Esophagus muscularis mucosa (tissue), 4 donors: ENCODE measurements at regions of chr11 and their contacts with region 1.

Region 1: DNA sequence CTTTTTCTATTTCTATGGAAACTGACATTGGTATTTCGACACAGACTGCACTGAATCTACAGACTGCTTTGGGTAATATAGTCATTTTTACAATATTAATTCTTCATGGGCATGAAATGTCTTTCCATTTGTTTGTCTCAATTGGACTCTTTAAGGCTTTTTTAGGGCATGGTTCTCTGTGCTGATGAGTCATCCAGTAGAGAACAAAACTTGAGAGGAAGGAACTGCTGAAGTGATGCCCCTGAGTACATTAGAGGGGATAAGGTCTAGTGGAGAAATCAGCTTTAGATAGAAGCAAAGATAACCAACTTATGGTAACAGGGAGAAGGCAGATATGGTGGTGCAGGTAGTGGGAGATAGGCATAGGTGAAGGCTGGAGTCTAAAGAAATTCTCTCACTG is 25.1 kb downstream of the TSG101 start:
- DNase-seq: no peak
- H3K4me3 ChIP-seq: no peak overlapping the region
- H3K27ac ChIP-seq: no peak overlapping the region
- H3K4me1 ChIP-seq: no peaks in the 10 kb centered on the region
- H3K27me3 ChIP-seq: no peaks in the 10 kb centered on the region
- CTCF ChIP-seq: no peak
- EP300 ChIP-seq: no peak
- POLR2A ChIP-seq: no peak

Region 2: DNA sequence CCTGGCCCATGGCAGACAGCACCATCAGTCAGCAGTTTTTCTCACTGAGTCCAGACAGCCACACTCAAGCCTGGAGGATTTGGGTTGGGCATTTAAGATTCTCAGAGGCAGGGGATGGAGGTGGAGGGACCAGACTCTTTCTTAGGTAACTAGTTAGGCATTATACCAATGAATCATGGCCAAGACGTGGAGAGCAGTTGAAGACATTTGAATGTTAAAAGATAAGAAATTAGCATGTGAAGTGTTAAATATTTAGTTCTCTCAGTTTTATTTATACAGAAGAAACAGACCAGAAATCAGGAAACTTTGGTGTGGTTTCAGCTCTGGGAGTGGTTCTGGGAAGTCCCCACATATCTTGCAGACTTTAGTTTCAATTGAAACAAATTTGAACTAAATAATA is 169.3 kb before region 1 on chr11:
- intact Hi-C with region 1: loop called (anchors 10 kb)
- DNase-seq: no peak
- H3K4me3 ChIP-seq: no peak overlapping the region
- H3K27ac ChIP-seq: no peak overlapping the region
- H3K4me1 ChIP-seq: peaks cover 0 to 3% (median 0%) of the 10 kb centered on the region in 4 donors
- H3K27me3 ChIP-seq: no peaks in the 10 kb centered on the region
- CTCF ChIP-seq: no peak
- EP300 ChIP-seq: no peak
- POLR2A ChIP-seq: no peak

Region 3: DNA sequence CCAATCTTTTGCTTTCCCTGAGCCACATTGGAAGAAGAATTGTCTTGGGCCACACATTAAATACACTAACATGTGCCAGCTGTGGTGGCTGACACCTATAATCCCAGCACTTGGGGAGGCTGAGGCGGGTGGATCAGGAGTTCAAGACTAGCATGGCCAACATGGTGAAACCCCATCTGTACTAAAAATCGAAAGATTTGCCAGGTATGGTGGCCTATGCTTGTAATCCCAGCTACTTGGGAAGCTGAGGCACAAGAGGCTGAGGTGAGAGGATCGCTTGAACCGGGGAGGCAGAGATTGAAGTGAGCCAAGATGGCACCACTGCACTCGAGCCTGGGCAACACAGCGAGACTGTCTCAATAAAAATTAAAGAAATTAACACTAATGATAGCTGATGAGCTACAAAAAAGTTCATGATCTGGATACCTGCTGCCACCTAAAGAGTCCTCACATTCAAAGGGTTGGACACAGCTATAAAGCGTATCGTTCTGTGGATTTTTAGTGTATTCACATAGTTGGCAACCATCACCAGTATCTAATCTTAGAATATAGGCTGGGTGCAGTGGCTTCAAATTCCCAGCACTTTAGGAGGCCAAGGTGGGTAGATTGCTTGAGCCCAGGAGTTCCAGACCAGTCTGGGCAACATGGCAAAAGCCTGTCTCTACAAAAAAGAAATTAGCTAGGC is 92.9 kb before region 1 on chr11:
- intact Hi-C with region 1: loop called (anchors 10 kb)
- DNase-seq: no peak
- H3K4me3 ChIP-seq: no peak overlapping the region
- H3K27ac ChIP-seq: peak overlapping the region in 1 of 4 donors; percentile 50
- H3K4me1 ChIP-seq: peaks cover 4 to 25% (median 16%) of the 10 kb centered on the region in 4 donors
- H3K27me3 ChIP-seq: no peaks in the 10 kb centered on the region
- CTCF ChIP-seq: no peak
- EP300 ChIP-seq: no peak
- POLR2A ChIP-seq: no peak

Region 4: DNA sequence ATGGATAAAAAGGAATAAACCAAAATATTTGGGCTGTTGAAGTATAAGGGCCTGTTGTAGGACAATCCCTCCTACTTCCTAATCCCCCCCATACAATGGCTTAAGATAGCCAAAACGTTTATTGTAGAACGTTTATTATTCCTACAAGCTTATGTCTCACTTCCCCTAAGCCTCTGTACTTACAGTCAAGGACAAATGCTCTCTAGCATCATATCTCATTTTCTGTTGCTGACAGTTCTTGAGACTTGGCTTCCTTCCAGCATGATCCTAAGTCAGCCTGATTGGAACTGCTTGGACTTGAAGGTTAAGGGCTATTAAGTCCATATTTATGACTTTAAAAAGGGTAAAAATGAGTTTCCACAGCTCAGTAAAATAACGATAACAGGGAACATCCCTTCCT is 106.7 kb after region 1 on chr11:
- intact Hi-C with region 1: no loop called
- DNase-seq: no peak
- H3K4me3 ChIP-seq: no peak overlapping the region
- H3K27ac ChIP-seq: no peak overlapping the region
- H3K4me1 ChIP-seq: peaks cover 0 to 10% (median 4%) of the 10 kb centered on the region in 4 donors
- H3K27me3 ChIP-seq: no peaks in the 10 kb centered on the region
- CTCF ChIP-seq: no peak
- EP300 ChIP-seq: no peak
- POLR2A ChIP-seq: no peak